Naive thymus-derived CD8-positive, alpha-beta T cell (primary cell): ENCODE measurements at regions of chr11 and their contacts with region 1.

Region 1: DNA sequence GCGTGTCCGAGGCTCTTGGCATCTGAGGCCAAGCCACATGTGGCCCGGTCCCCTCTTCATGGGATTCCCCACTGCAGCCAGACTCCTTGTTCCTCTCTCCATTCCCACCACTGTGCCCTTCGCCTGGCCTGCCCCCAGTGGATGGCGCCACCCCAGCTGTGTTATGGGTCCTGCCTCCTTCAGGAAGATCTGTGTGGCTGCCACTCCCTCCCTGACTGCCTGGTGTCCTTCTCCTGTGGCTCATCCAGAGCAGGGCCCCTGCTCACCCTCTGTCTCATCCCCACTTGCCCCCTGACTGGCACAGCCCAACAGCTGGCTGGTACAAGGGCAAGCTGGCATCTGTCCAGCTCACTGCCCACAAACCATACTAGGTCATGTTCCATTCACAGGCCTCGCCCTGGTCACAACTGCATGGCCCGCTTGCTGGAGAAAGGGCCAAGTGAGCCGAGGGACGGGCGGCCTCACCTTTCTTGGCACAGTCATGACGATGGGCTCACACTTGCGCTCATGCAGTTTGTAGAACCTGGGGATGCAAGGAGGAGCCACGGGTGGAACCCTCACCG is 1.9 kb upstream of the PTPRCAP start:
- DNase-seq: peak in 4 of 10 donors; percentile 22 to 35 (median 26)
- ATAC-seq: no peak
- H3K4me3 Mint-ChIP-seq: peak overlapping the region; percentile 82 to 100 (median 96)
- H3K27ac Mint-ChIP-seq: peak overlapping the region; percentile 87 to 97 (median 94)
- H3K4me1 Mint-ChIP-seq: peaks cover 31 to 79% (median 67%) of the 10 kb centered on the region in 4 donors
- H3K27me3 Mint-ChIP-seq: no peaks in the 10 kb centered on the region

Region 2: GRCh38 chr11:67277231-67277961 is 162.0 kb before region 1 on chr11:
- POLR2A ChIA-PET with region 1: interaction called, 10 read pairs
- DNase-seq: peak; percentile 84 to 95 (median 90)
- ATAC-seq: peak; percentile 89 to 96
- H3K4me3 Mint-ChIP-seq: peak overlapping the region; percentile 74 to 98 (median 86)
- H3K27ac Mint-ChIP-seq: peak overlapping the region; percentile 90 to 100 (median 98)
- H3K4me1 Mint-ChIP-seq: peaks cover 28 to 83% (median 78%) of the 10 kb centered on the region in 4 donors
- H3K27me3 Mint-ChIP-seq: no peaks in the 10 kb centered on the region

Region 3: GRCh38 chr11:67401495-67402191 is 37.8 kb before region 1 on chr11 and contains the start of gene PPP1CA:
- POLR2A ChIA-PET with region 1: interaction called, 2,390 read pairs
- DNase-seq: peak; percentile 82 to 98 (median 93)
- ATAC-seq: peak; percentile 62 to 71
- H3K4me3 Mint-ChIP-seq: peak within 1 kb of the TSS; percentile 87 to 99 (median 97)
- H3K27ac Mint-ChIP-seq: peak within 1 kb of the TSS; percentile 85 to 96 (median 93)
- H3K4me1 Mint-ChIP-seq: peaks cover 18 to 79% (median 62%) of the 10 kb centered on the region in 4 donors
- H3K27me3 Mint-ChIP-seq: no peaks in the 10 kb centered on the region
- polyA plus RNA-seq, gene PPP1CA: 357 to 518 (median 403) TPM

Region 4: DNA sequence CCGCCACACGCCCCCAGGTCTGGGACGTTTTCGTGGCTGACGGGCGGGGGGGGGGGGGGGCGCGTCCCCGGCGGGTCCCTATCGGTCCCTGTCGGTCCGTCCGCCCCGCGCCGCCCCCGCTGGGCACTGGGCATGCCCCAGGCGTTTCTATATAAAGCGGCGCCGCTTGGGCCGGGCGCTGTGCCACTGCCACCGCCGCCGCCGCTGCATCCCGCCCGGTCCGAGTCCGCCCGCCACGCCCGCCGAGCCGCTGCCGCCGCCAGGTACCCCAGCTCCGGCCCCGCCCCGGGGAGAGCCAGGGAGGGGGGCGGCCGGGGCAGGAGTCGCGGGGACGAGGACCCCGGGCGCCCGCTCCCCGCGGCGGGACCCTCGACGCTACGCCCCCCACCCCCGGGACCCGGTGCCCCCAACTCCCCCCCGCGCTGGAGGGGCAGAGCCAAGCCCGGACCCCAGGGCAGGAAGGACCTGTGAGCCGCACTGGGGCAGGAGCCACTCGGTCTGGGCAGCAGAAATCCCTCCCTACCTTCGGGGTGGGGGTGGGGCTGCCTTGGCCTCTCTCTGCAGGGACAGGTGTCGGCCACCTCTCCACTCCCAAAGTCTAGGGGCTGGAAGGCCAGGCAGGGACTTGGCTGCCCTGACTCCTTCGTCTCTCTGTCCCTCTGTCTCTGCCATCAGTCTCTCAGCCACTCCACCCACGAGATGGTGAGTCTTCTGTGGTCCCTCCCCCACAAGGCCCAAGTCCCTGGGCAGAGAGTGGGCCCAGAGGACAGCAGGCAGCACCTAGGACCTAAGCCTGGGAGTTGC is 23.7 kb before region 1 on chr11 and contains the start of gene CARNS1:
- POLR2A ChIA-PET with region 1: interaction called, 1,094 read pairs
- DNase-seq: no peak
- ATAC-seq: no peak
- H3K4me3 Mint-ChIP-seq: peak within 1 kb of the TSS; percentile 84 to 96 (median 93)
- H3K27ac Mint-ChIP-seq: peak within 1 kb of the TSS; percentile 83 to 100 (median 98)
- H3K4me1 Mint-ChIP-seq: peaks cover 34 to 87% (median 78%) of the 10 kb centered on the region in 4 donors
- H3K27me3 Mint-ChIP-seq: no peaks in the 10 kb centered on the region
- polyA plus RNA-seq, gene CARNS1: 2.2 to 3.7 (median 2.3) TPM

Region 5: DNA sequence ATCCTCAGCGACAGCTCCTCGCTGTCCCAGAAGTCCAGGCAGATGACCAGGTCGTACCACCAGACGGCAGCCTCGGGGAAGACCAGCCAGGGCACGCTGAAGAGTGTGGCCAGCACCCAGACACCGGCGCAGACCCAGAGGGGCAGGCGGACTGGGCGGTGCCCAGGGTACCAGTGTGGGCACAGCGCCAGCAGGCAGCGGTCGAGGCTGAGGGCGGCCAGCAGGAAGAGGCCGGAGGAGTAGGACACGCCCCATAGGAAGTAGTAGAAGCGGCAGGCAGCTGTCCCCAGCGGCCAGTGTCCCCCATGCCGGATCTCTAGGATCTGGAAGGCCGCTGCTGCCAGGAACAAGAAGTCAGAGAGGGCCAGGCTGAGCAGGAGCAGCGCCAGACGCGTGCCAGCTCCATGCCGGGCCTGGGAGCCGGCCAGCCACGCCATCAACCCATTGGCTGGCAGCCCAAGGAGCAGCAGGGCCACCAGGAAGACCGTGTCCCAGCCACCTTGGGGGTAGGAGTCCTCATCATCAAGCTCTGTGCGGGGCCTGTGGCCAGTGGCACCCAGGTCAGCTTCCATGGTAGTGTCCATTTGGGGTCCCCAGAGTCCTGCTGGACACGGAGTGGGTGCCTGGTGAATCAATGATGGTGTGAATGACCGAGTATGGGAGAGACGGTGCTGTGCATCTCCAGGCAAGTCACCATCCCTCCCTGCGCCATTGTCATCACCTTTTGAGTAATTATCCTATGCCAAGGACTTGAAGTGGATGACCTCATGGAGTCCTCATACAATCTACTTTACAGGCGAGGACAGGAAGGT is 12.9 kb after region 1 on chr11 and contains the start of gene GPR152:
- POLR2A ChIA-PET with region 1: interaction called, 780 read pairs
- DNase-seq: no peak
- ATAC-seq: no peak
- H3K4me3 Mint-ChIP-seq: no peak within 1 kb of the TSS
- H3K27ac Mint-ChIP-seq: peak within 1 kb of the TSS in 3 of 10 donors; percentile 8 to 80 (median 63)
- H3K4me1 Mint-ChIP-seq: peaks cover 11 to 42% (median 27%) of the 10 kb centered on the region in 4 donors
- H3K27me3 Mint-ChIP-seq: no peaks in the 10 kb centered on the region
- polyA plus RNA-seq, gene GPR152: 0.20 to 1.2 (median 0.86) TPM

Region 6: DNA sequence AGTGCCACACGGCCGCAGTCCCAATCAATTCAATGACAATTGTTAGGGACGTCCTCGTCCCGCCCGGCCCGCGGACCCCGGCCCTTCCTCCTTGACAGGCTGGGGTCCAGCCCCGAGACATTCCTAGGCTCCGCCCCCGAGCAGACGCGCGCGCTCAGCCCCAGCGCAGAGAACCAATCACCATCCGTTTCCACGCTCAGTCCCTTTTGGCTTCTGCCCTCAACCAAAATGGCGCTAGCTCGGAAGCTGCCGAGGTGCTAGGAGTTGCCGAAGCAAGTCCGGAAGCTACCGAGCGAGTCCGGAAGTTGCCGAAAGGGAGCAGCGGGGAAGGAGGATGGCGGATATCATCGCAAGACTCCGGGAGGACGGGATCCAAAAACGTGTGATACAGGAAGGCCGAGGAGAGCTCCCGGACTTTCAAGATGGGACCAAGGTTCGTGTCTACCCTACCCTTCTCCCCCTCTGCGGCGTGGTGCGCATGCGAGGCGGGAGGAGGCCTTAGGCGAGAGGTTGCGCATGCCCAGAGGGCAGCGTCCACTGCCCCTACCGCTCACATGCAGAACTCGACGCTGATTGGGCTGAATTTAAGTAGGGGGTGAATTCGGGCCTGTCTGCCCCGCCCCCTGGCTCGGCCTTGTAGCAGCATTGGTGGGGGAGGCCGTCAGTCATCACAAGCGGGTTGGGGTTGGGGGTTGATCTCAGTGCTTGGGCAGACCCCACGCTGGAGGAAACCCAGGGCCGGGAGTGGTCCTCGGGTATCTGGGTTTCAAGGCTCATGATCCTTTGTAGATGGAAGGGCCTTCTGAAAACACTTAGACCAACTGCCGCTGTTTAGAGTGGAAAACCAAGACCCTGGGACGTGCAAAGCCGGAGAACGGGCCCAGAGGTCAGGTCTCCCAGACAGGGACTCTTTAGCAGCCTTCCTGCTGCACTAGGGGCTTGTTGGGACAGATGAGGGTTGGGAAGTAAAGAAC is 43.7 kb after region 1 on chr11 and contains the start of gene AIP:
- POLR2A ChIA-PET with region 1: interaction called, 126 read pairs
- DNase-seq: peak; percentile 90 to 99 (median 97)
- ATAC-seq: peak; percentile 75 to 78
- H3K4me3 Mint-ChIP-seq: peak within 1 kb of the TSS; percentile 86 to 100 (median 98)
- H3K27ac Mint-ChIP-seq: peak within 1 kb of the TSS; percentile 96 to 100 (median 99)
- H3K4me1 Mint-ChIP-seq: peaks cover 29 to 56% (median 53%) of the 10 kb centered on the region in 4 donors
- H3K27me3 Mint-ChIP-seq: no peaks in the 10 kb centered on the region
- polyA plus RNA-seq, gene AIP: 146 to 169 (median 146) TPM